Activated CD8-positive, alpha-beta T cell treated with anti-CD3 and anti-CD28 coated beads, Interleukin-2, amount 10 ng/mL, durations not matched to agents 7 days and 5 days (primary cell): ENCODE measurements at regions of chr14 and their contacts with region 1.

Region 1: DNA sequence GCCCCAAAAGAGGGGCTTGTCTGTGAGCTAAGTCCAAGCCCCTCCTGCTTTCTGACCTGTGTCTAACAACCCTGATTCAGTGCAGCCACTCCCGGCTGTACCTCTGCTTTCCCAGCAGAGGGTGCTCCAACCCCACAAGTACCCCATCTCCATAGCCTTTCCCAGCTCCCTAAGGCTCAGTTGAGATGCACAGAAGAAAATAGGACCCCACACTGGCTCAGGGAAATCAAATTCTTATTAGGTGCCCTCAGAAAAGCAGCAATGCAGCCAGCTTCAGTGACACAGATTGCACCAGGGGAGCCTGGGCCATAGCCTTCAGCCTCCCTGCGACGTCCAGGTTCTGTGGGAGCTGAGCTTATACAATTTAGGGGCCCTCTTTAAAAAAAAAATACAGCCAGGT is 49.9 kb downstream of the LRRC74A start:
- DNase-seq: peak; percentile 63
- ATAC-seq: peak; percentile 76
- H3K4me3 Mint-ChIP-seq: no peak overlapping the region
- H3K27ac Mint-ChIP-seq: no peak overlapping the region
- H3K4me1 Mint-ChIP-seq: peaks cover 2% of the 10 kb centered on the region
- H3K27me3 Mint-ChIP-seq: no peaks in the 10 kb centered on the region

Region 2: GRCh38 chr14:76710056-76711010 is 165.7 kb before region 1 on chr14:
- CTCF ChIA-PET with region 1: interaction called, 16 read pairs
- POLR2A ChIA-PET with region 1: no interaction called
- DNase-seq: peak; percentile 51
- ATAC-seq: no peak
- H3K4me3 Mint-ChIP-seq: no peak overlapping the region
- H3K27ac Mint-ChIP-seq: no peak overlapping the region
- H3K4me1 Mint-ChIP-seq: no peaks in the 10 kb centered on the region
- H3K27me3 Mint-ChIP-seq: peaks cover 11% of the 10 kb centered on the region

Region 3: DNA sequence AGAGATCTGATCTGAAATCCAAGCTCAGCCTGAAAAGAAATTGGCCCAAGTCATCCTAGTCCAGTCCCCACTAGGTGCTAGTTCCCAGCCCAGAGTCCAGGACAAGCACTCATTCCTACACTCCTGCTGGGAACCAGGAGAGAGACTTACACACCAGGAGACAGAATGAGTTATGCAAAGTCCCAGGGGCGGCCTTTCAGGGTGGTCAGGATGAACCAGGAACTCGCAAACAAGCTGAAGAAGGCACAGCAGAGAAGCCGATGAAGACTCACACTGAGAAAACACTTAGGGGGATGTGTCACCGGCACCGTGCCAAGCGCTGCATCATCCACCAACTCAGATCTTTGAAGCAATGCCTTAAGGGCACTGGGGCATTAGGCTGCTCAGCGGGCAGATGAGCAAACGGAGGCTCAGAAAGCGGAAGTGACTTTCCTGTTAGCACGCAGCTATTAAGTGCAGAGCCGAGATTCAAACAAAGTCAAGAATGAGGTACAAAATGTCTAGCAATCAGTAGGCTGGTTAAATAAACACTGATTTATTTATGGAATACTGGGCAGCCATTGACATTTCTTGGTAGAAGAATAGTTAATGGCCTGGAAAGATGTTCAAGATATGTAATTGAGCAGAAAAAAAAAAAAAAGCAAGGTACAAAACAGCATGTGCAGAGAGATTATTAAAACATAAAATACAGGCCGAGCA is 28.8 kb after region 1 on chr14:
- CTCF ChIA-PET with region 1: interaction called, 12 read pairs
- POLR2A ChIA-PET with region 1: interaction called, 3 read pairs
- DNase-seq: peak; percentile 75
- ATAC-seq: peak; percentile 59
- H3K4me3 Mint-ChIP-seq: no peak overlapping the region
- H3K27ac Mint-ChIP-seq: peak overlapping the region; percentile 50
- H3K4me1 Mint-ChIP-seq: peaks cover 42% of the 10 kb centered on the region
- H3K27me3 Mint-ChIP-seq: no peaks in the 10 kb centered on the region

Region 4: GRCh38 chr14:77040059-77040740 is 164.1 kb after region 1 on chr14:
- CTCF ChIA-PET with region 1: interaction called, 11 read pairs
- POLR2A ChIA-PET with region 1: no interaction called
- DNase-seq: peak; percentile 94
- ATAC-seq: peak; percentile 72
- H3K4me3 Mint-ChIP-seq: peak overlapping the region; percentile 76
- H3K27ac Mint-ChIP-seq: peak overlapping the region; percentile 97
- H3K4me1 Mint-ChIP-seq: peaks cover 89% of the 10 kb centered on the region
- H3K27me3 Mint-ChIP-seq: no peaks in the 10 kb centered on the region

Region 5: DNA sequence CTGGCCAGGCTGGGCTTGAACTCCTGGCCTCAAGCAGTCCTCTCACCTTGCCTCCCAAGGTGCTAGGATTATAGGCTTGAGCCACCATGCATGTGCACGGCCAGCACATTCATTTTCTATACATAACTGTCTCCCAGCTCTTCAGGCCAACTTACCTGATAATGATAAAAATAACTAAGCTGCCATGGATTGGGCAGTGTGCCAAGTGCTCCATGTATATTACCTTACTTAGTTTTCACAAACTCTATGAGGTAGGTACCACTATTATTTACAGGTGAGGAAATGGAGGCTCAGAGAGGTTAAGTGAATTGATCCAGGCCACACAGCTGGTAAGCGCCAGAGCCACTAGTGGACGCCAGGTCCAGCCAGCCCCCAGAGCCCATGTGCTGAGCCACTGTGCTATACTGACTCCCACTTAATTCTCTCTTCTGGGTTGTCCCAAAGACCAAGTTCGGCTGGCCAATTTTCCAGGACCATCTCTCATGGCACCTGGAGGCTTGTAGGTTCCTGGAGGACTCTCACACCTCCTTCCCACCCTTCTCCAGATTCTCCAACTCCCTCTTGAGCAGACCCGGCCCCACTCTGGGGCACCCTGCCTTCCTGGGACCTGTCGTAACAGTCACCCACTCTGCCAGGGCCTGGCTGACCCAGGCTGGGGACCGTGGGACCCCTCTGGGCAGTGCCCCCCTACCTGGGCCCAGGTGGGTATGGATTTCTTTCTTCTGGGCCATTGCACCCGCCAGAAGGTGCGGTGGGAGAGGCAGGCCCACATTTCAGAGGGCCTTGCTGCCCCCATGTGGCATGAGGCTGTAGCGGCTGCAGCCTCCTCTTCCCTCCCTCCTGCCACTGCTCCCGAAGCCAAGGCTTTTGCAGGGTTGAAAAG is 191.8 kb after region 1 on chr14:
- CTCF ChIA-PET with region 1: interaction called, 371 read pairs
- POLR2A ChIA-PET with region 1: interaction called, 7 read pairs
- DNase-seq: peak; percentile 72
- ATAC-seq: peak; percentile 83
- H3K4me3 Mint-ChIP-seq: no peak overlapping the region
- H3K27ac Mint-ChIP-seq: no peak overlapping the region
- H3K4me1 Mint-ChIP-seq: peaks cover 9% of the 10 kb centered on the region
- H3K27me3 Mint-ChIP-seq: peaks cover 11% of the 10 kb centered on the region

Region 6: GRCh38 chr14:77092676-77093075 is 216.6 kb after region 1 on chr14:
- CTCF ChIA-PET with region 1: interaction called, 41 read pairs
- POLR2A ChIA-PET with region 1: no interaction called
- DNase-seq: no peak
- ATAC-seq: no peak
- H3K4me3 Mint-ChIP-seq: no peak overlapping the region
- H3K27ac Mint-ChIP-seq: no peak overlapping the region
- H3K4me1 Mint-ChIP-seq: peaks cover 15% of the 10 kb centered on the region
- H3K27me3 Mint-ChIP-seq: peaks cover 7% of the 10 kb centered on the region